Activated T-helper 1 cell treated with anti-CD3 and anti-CD28 coated beads, Interleukin-12 subunit alpha, Interleukin-12 subunit beta, Interleukin-2, Interleukin-4 antibody, amounts not matched to agents 30 ng/mL and 10 ng/mL and 1 ng/mL, durations not matched to agents 14 hours and 24 hours and 36 hours (primary cell): ENCODE measurements at regions of chr1 and their contacts with region 1.

Region 1: DNA sequence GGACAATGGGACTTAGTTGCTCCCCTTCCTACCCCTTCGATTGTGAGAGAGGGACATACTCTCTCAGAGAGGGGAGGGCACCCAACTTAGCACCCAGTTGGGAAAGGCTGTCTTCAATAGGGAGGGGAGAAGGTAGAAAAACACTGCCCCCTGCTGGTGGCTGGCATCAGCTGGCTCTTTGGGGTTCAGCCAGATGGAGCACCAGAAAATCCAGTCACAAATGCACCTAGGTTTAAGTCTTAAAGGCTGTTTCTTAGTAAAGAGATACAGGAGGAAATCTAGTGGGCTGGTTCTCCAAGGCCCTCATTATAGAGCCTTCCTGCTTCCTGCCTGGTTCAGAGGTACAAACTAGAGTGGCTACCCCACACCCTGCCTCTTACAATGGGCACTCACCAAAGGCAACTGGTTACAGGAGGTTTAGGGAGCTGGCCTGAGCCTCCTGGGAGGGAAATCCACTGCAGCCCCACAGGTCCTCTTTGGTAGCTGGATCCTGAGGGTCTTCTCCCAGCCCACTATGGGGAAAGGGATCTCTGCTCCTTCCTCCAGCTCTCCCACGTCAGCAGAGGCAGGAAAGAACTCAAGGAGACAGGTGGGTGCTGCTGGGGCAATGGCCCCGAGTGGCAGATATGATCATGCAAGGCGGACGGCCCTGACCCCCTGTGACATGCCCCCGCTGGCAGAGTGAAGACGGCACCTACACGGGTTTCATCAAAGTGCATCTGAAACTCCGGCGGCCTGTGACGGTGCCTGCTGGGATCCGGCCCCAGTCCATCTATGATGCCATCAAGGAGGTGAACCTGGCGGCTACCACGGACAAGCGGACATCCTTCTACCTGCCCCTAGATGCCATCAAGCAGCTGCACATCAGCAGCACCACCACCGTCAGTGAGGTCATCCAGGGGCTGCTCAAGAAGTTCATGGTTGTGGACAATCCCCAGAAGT is 28.3 kb downstream of the EIF2D start:
- DNase-seq: peak; percentile 70
- H3K4me3 Mint-ChIP-seq: peak overlapping the region; percentile 85
- H3K27ac Mint-ChIP-seq: peak overlapping the region; percentile 100
- H3K4me1 Mint-ChIP-seq: peaks cover 95% of the 10 kb centered on the region
- H3K27me3 Mint-ChIP-seq: no peaks in the 10 kb centered on the region

Region 2: GRCh38 chr1:206469933-206470691 is 113.9 kb before region 1 on chr1 and contains the start of gene IKBKE:
- intact Hi-C with region 1: loop called (anchors 1 kb)
- DNase-seq: peak; percentile 63
- H3K4me3 Mint-ChIP-seq: peak within 1 kb of the TSS; percentile 98
- H3K27ac Mint-ChIP-seq: peak within 1 kb of the TSS; percentile 94
- H3K4me1 Mint-ChIP-seq: peaks cover 87% of the 10 kb centered on the region
- H3K27me3 Mint-ChIP-seq: no peaks in the 10 kb centered on the region
- total RNA-seq, gene IKBKE: 59.8 and 64.9 TPM in 2 replicates

Region 3: GRCh38 chr1:206479183-206480125 is 104.5 kb before region 1 on chr1:
- intact Hi-C with region 1: loop called (anchors 1 kb)
- DNase-seq: peak; percentile 25
- H3K4me3 Mint-ChIP-seq: no peak overlapping the region
- H3K27ac Mint-ChIP-seq: peak overlapping the region; percentile 85
- H3K4me1 Mint-ChIP-seq: peaks cover 31% of the 10 kb centered on the region
- H3K27me3 Mint-ChIP-seq: no peaks in the 10 kb centered on the region

Region 4: DNA sequence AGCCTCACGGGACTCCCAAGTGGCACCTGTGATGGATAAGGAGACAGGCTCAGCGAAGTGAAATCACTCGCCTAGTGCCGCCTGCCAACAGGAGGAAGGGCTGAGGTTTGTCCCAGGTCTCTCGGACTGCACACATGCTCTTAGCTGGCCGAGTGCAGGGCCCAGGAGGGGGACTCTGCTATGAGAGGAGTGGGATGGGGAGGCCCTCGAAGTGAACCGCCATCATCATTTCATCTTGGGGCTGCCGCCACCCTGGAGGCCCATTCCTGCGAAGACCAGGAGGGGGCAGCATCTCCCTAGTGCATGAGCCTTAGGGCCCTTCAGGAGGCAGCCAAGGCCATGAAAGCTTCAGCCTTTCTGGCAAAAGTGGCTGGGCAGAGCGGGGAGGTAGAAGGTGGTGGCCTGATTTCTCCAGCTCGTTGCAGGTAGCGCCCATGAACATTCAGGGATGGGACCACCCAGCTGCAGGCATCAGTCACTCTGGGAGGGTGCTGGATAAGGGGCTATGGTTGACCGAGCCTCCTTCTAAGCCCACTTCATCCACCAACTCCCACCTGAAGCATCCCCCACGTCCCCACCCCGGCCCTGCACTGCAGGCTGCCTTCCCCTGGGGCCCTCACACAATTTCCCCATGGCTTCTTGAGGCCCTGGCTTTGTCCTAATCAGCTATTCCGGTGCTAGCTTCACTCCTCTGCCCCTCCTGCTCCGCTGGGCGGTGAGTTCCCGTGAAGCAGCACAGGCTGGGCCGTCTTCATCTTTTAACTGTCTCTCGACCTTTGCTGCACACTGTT is 93.8 kb before region 1 on chr1:
- intact Hi-C with region 1: loop called (anchors 1 kb)
- DNase-seq: peak; percentile 43
- H3K4me3 Mint-ChIP-seq: no peak overlapping the region
- H3K27ac Mint-ChIP-seq: peak overlapping the region; percentile 70
- H3K4me1 Mint-ChIP-seq: peaks cover 13% of the 10 kb centered on the region
- H3K27me3 Mint-ChIP-seq: no peaks in the 10 kb centered on the region

Region 5: GRCh38 chr1:206507284-206508129 is 76.5 kb before region 1 on chr1 and contains the start of gene RASSF5:
- intact Hi-C with region 1: loop called (anchors 1 kb)
- DNase-seq: peak; percentile 82
- H3K4me3 Mint-ChIP-seq: peak within 1 kb of the TSS; percentile 78
- H3K27ac Mint-ChIP-seq: peak within 1 kb of the TSS; percentile 47
- H3K4me1 Mint-ChIP-seq: peaks cover 54% of the 10 kb centered on the region
- H3K27me3 Mint-ChIP-seq: peaks cover 17% of the 10 kb centered on the region
- total RNA-seq, gene RASSF5: 220 and 221 TPM in 2 replicates

Region 6: DNA sequence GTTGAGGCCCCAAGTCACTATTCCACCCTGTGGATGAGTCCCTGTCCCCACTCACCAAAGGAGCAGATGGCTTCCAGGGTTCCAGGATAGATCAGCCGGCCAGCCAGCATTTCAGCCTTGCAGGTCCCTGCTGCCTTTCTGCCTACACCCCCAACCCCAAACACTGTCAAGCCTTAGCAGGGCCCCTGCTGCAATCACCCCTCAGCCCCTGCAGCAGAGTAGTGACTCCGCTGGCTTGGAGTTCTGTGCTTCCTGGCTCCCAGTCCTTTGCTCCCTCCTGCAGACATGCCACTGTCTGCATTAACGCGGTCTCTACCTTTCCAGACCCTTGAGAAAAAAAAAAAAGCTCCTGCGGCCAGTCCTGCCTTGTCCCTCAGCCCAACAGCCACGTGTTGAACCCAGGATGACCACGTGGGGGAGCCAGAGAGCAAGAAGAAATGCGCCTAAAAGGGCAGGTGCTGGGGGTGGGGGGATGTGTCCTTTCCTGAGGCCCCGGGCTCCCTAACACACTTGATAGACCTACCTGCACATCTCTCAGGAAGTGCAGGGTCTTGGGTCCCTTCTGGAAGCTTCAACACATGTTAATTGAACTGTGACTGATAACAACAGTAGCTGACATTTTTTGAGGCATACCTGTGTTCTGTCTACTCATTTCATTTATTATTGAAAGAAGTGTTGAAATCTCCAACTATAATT is 39.3 kb before region 1 on chr1:
- intact Hi-C with region 1: loop called (anchors 1 kb)
- DNase-seq: peak; percentile 69
- H3K4me3 Mint-ChIP-seq: no peak overlapping the region
- H3K27ac Mint-ChIP-seq: peak overlapping the region; percentile 22
- H3K4me1 Mint-ChIP-seq: peaks cover 33% of the 10 kb centered on the region
- H3K27me3 Mint-ChIP-seq: peaks cover 2% of the 10 kb centered on the region

Region 7: DNA sequence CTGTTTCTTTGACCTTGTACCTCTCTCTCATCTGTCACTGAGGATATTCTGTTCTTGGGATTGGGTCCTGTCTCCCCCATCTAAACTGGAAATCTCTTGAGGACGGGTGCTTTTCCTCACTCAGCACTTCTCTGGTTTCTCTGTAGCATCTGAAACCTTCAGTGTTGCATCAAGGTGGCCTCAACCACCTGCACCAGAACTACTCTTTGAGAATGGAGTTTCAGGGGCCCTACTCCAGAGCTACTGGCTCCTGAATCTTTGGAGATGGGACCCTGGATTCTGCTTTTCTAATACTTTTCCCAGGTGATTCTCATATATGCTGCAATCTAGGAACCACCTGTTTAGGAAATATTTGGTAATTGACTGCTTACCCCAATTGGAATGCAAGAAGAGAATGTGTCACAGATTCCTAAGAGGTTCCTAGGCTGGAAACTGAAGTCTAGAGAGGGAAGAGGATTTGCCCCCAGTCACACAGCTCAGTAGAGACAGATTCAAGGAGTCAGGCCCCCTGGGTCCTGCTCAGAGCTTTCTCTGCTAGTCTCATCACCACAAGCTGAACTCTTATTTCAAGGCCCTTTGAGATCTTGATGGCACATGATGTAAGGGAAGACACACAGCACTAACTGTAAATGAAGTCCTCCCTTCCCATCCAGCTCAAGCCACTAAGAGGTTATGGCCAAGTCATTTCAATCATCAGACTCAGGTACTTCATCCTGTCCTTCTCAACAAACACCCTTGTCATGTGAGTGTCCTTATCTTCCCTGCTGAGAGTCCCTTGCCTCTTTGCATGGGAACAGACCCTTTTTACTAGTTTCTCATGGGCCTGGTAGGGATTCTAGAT is 20.4 kb before region 1 on chr1:
- intact Hi-C with region 1: loop called (anchors 2 kb)
- DNase-seq: no peak
- H3K4me3 Mint-ChIP-seq: peak overlapping the region; percentile 78
- H3K27ac Mint-ChIP-seq: peak overlapping the region; percentile 91
- H3K4me1 Mint-ChIP-seq: peaks cover 93% of the 10 kb centered on the region
- H3K27me3 Mint-ChIP-seq: peaks cover 2% of the 10 kb centered on the region